ENCODE measurements at regions of chr5 and their contacts with region 1.

Region 1: DNA sequence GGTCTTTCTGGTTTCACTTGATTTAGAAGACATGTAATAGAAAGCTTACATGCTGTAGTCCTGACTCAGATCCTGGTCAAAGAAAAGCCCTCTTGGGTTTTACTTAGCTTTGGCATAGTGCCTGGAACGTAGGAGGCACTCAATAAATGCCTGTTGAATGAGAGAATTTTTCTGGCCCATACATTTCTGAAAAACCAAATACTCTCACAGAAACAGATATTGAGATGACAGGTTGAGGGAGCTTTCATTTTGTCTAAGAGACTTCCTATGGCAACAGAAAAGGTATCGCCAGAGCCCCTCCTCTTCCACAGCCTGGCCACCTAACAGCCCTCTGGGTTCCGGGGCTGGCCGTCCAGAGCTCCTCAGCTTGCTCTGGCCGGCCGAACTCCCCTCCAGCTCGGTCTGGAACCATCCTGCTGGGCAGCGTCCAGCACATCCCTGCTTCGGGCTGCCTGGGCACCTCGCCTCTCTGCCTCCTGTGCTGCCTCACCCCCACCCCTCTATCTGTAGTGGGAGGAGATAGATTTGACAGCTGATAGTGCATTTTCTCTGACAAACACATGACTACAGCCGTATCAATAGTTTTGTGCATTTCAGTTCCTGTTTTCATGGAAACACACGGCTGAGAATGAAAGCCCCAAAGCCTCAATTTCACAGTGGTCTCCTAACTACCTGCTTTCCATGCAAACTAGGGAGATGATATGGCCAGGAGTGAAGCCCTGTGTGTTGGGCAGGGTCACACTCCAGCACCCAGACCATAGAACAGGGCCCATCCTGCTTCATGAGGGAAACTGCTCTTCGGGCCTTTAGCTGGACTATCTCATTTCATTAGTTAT is 1.1 kb downstream of the IL4 start:
- DNase-seq: no peak
- ATAC-seq: peak in 3 of 4 donors; percentile 26 to 79 (median 35)
- H3K4me3 ChIP-seq: peak overlapping the region in 1 of 12 donors; percentile 19
- H3K27ac ChIP-seq: peak overlapping the region in 2 of 12 donors; percentile 24 to 28
- H3K4me1 ChIP-seq: peaks cover 0 to 13% (median 0%) of the 10 kb centered on the region in 12 donors
- H3K27me3 ChIP-seq: no peaks in the 10 kb centered on the region
- CTCF ChIP-seq: no peak
- POLR2A ChIP-seq: no peak

Region 2: DNA sequence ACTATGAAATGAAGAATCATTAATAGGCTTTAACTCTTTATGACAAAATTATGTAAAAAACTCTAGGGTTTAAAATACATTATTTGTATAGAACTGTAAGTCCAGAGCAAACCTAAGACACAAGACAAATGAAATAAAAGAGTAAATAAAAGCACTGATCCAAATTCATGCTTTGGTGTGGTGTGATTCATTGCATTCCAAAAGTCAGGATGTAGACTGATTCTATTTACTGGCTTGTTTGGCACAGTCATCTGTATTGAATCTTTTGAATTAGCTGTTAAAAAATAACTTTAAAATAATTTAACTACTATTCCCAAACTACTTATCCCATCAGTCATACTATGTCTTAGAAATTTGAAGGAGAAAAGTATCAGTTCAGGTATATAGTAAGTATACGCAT is 30.0 kb after region 1 on chr5:
- intact Hi-C with region 1: loop called in 1 of 10 experiments (anchors 1 kb)
- DNase-seq: no peak
- ATAC-seq: no peak
- H3K4me3 ChIP-seq: no peak overlapping the region
- H3K27ac ChIP-seq: no peak overlapping the region
- H3K4me1 ChIP-seq: no peaks in the 10 kb centered on the region
- H3K27me3 ChIP-seq: no peaks in the 10 kb centered on the region
- CTCF ChIP-seq: no peak
- POLR2A ChIP-seq: no peak